ENCODE measurements at regions of chr17 and their contacts with region 1.

Region 1: GRCh38 chr17:47941236-47941994 is at the start of gene PNPO:
- DNase-seq: peak; percentile 95
- H3K4me3 Mint-ChIP-seq: peak within 1 kb of the TSS; percentile 92
- H3K27ac Mint-ChIP-seq: peak within 1 kb of the TSS; percentile 96
- H3K4me1 Mint-ChIP-seq: peaks cover 68% of the 10 kb centered on the region
- H3K27me3 Mint-ChIP-seq: peaks cover 1% of the 10 kb centered on the region
- total RNA-seq, gene PNPO: 58.8 and 60.7 TPM in 2 replicates

Region 2: DNA sequence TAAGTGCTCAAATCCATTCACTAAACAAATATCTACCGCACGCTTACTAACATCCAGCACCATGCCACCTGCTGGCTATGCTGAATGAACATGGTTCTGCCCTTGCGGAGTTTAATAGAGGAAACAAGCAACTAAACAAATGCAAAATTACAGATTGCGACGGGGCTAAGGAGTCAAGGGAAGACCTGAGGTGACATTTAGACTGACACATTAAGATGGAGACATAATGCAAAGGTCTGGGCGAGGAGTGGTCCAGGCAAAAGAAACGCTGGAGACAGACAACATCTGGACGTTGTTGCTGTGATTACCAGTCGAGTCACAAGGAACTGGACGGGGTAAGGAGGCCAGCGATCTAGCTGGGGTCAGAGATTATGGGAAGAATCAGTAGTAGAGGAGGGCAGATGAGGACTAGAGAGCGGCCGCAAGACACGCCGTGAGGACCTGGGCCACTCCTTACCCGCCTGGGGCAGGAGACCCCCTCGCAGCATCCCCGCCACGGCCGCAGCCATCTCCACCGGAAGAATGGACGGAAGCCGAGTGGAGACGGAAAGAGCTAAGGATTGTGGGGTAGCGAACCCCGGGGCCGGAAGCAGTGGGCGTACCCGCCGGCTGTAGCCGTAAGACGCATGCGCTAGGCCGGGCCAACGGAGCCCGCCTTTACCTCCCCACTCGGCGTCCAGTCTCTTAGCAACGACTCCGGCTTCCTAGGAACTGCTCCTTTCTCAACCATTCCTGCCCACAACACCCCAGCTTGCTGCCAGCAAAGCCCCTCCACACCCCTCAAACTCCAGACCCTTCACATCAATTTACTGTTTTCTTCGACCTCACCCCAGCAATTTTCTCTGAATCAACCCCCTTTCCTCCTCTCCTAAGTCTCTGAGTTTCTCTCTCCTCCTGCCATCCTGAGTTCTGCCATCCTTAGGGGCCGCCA is 110.1 kb before region 1 on chr17 and contains the starts of genes LRRC46 and MRPL10:
- intact Hi-C with region 1: loop called (anchors 1 kb)
- DNase-seq: peak; percentile 92
- H3K4me3 Mint-ChIP-seq: peak within 1 kb of the TSS; percentile 90
- H3K27ac Mint-ChIP-seq: peak within 1 kb of the TSS; percentile 88
- H3K4me1 Mint-ChIP-seq: peaks cover 43% of the 10 kb centered on the region
- H3K27me3 Mint-ChIP-seq: peaks cover 1% of the 10 kb centered on the region
- total RNA-seq, gene LRRC46: 0.39 and 0.70 TPM in 2 replicates
- total RNA-seq, gene MRPL10: 53.6 and 56.9 TPM in 2 replicates

Region 3: DNA sequence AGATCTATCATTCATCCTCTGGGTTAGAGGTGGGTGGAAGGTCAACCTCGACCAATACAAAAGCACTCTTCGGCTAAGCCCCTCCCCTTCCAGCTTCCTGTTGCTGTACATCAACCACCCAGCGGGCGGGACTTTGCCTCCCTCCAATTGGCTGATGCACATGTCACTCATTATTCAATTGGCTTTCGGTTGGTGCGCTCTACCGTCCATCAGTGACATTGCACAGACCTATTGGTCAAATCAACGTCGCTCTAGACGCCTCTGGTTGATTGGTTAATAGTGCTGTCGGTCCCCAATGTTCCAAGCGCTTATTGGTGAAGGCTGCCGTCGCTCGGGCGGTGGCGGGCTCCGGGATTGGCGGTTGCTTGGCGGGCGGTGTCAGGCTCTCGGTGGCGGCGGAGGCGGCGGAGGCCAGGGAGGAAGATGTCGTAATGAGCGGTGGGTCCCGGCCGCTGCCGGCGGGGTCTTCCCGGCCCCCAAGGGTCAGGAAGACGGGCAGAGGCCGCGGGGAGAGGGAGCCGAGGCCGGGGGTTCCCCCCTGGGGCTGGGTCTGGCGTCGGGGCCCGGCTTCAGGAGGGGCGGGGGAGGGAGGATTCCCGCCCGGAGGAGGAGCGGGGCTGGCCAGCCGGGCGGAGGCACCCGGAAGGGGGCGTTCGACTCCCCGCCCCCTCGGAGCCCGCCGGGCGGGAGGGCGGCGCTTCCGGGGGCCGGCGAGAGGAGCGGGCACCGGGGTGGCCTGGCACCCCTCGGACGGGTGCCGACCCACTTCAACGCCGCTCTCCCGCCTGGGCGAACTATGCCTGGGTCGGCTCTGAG is 45.4 kb before region 1 on chr17 and contains the start of gene SP2:
- intact Hi-C with region 1: loop called (anchors 1 kb)
- DNase-seq: peak; percentile 100
- H3K4me3 Mint-ChIP-seq: peak within 1 kb of the TSS; percentile 98
- H3K27ac Mint-ChIP-seq: peak within 1 kb of the TSS; percentile 100
- H3K4me1 Mint-ChIP-seq: peaks cover 47% of the 10 kb centered on the region
- H3K27me3 Mint-ChIP-seq: peaks cover 3% of the 10 kb centered on the region
- total RNA-seq, gene SP2: 24.0 and 26.3 TPM in 2 replicates

Region 4: DNA sequence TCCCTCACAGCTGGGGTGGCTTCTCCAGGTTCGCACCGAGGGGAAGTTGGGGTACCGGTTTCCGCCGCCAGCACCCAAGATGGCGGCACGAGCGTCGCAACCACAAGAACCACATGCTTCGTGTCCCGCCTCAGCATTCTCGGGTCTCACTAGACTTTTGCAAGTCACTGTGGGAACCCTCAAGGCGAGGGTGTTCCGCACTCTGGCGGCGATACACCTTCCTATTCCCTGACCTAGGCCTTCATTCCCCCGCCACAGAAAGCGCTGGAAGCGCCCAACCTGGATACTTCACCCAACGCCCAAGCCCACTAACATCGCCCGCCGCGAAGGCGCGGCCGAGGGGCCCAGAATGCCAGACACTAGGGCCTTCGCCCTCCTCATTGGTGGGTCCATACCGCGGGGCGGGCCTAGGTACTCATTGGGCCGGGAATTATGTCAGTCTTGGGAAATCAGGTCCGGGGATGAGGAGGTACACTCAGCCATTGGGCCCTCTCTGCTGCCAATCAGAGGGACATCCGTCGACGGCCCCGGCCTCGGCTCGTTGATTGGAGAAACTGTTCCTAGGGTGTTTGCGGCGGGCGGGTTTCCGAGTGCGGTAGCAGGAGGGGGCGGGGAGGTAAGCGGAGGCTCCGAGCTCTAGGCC is 106.4 kb after region 1 on chr17 and contains the start of gene NFE2L1:
- intact Hi-C with region 1: loop called (anchors 1 kb)
- DNase-seq: peak; percentile 97
- H3K4me3 Mint-ChIP-seq: peak within 1 kb of the TSS; percentile 99
- H3K27ac Mint-ChIP-seq: peak within 1 kb of the TSS; percentile 100
- H3K4me1 Mint-ChIP-seq: peaks cover 69% of the 10 kb centered on the region
- H3K27me3 Mint-ChIP-seq: peaks cover 1% of the 10 kb centered on the region
- total RNA-seq, gene NFE2L1: 86.6 and 92.0 TPM in 2 replicates

Region 5: GRCh38 chr17:48892940-48893645 is 951.7 kb after region 1 on chr17:
- intact Hi-C with region 1: loop called (anchors 5 kb)
- DNase-seq: no peak
- H3K4me3 Mint-ChIP-seq: peak overlapping the region; percentile 97
- H3K27ac Mint-ChIP-seq: peak overlapping the region; percentile 95
- H3K4me1 Mint-ChIP-seq: peaks cover 31% of the 10 kb centered on the region
- H3K27me3 Mint-ChIP-seq: no peaks in the 10 kb centered on the region